Activated T-helper 1 cell treated with anti-CD3 and anti-CD28 coated beads, Interleukin-12 subunit alpha, Interleukin-12 subunit beta, Interleukin-2, Interleukin-4 antibody, amounts not matched to agents 30 ng/mL and 10 ng/mL and 1 ng/mL, durations not matched to agents 14 hours and 24 hours and 36 hours (primary cell): ENCODE measurements at regions of chr7 and their contacts with region 1.

Region 1: DNA sequence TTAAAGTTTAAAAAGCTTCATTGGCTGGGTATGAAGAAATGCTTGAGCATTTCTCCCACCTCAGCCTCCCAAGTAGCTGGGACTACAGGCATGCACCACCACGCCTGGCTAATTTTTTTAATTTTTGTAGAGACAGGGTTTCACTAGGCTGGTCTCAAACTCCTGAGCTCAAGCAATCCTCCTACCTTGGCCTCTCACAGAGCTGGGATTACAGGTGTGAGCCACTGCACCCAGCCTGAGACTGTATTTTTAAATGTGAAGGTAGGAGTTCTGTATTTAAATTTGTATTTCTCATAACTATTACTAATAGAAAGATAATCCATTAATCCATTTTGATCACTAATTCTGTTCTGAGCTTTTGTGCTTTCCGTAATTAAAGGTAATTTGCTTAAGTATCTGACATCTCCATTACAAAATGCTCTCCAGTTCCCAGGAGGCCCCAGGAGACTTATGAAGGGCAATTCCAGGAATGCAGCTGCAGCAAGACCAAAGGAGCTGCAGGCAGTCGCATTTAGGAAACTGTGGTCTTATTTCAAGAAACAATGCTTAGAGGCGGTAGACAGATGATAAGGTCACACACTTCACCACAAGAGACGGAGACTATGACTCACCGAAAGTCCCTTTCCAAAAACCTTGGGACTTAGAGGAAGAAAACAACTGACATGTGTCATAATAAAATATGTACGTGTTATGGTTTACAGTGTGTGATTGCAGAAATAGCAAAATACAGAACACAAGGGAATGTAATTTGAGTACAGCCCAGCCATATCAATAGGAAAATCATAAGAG is 23.3 kb downstream of the YAE1 start:
- DNase-seq: peak; percentile 77
- H3K4me3 Mint-ChIP-seq: peak overlapping the region; percentile 63
- H3K27ac Mint-ChIP-seq: peak overlapping the region; percentile 80
- H3K4me1 Mint-ChIP-seq: peaks cover 69% of the 10 kb centered on the region
- H3K27me3 Mint-ChIP-seq: no peaks in the 10 kb centered on the region

Region 2: GRCh38 chr7:39609113-39609934 is 19.8 kb after region 1 on chr7:
- intact Hi-C with region 1: loop called (anchors 2 kb)
- DNase-seq: no peak
- H3K4me3 Mint-ChIP-seq: peak overlapping the region; percentile 25
- H3K27ac Mint-ChIP-seq: peak overlapping the region; percentile 27
- H3K4me1 Mint-ChIP-seq: peaks cover 54% of the 10 kb centered on the region
- H3K27me3 Mint-ChIP-seq: peaks cover 13% of the 10 kb centered on the region

Region 3: DNA sequence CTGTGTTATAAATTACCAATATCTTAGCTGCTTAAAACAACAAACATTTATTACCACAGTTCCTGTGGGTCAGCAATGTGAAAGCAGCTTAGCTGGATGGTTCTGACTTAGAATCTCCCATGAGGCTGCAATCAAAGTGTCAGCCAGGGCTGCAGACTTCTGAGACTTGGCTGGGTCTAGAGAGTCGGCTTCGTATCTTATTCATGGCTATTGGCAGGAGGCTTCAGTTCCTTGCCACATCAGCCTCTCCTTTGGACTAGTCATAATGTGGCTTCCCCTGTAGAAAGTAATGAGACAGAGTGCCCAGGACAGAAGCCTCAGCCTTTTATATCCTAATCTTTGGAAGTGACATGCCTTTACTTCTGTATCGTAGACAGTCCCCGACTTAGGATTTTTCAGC is 61.2 kb after region 1 on chr7:
- intact Hi-C with region 1: no loop called
- DNase-seq: no peak
- H3K4me3 Mint-ChIP-seq: no peak overlapping the region
- H3K27ac Mint-ChIP-seq: no peak overlapping the region
- H3K4me1 Mint-ChIP-seq: peaks cover 19% of the 10 kb centered on the region
- H3K27me3 Mint-ChIP-seq: no peaks in the 10 kb centered on the region

Region 4: GRCh38 chr7:39691821-39692220 is 102.3 kb after region 1 on chr7:
- intact Hi-C with region 1: loop called (anchors 5 kb)
- DNase-seq: no peak
- H3K4me3 Mint-ChIP-seq: no peak overlapping the region
- H3K27ac Mint-ChIP-seq: no peak overlapping the region
- H3K4me1 Mint-ChIP-seq: no peaks in the 10 kb centered on the region
- H3K27me3 Mint-ChIP-seq: no peaks in the 10 kb centered on the region

Region 5: DNA sequence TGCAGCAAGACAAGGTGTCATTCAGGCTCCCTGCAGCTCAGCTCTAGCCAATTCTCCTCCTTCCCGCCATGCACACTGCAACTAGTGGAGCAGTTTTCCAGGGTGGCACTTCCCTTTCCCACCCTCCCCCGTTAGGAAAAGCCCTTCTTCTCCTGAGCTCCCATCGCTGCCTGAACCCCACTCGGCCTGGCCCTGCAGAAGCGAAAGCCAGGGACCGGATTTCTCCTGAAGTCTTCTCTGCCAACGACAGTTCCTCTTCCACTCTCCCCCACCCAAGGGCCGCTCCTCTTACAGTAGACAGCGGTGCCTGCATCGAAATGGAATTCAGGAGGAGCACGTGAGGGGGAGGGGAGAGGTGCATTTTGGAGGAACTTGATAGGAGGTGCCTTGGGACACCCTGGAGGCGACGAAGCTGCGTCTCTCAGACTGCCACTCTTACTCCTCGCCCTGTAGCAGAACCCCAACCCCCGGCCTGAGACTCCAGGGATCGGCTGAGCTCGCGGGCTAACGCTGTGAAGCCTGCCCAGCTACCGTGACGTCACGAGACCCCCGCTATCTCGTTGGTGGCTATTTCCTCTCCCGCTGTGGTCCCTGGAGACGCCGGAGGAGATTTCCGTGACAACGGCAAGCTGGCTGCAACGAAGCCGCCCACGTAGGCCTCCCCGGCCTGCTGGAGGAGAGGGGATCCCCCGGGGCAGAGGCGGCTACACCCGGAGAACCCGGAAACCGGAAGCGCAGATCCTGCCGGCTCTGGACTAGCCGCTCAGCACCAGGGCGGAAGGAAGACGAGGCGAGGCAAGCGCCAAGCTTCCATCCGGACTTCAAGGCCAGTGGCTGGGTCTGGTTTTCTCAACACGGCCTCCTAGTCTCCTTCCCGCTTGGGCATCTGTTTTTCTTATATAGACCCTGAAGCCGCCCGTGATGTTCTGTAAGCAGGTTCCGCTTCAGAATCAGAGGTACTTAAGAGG is 143.6 kb after region 1 on chr7:
- intact Hi-C with region 1: loop called (anchors 1 kb)
- DNase-seq: peak; percentile 97
- H3K4me3 Mint-ChIP-seq: peak overlapping the region; percentile 86
- H3K27ac Mint-ChIP-seq: peak overlapping the region; percentile 95
- H3K4me1 Mint-ChIP-seq: peaks cover 46% of the 10 kb centered on the region
- H3K27me3 Mint-ChIP-seq: peaks cover 6% of the 10 kb centered on the region